Activated B cell treated with CpG ODN at 0.5 μM for 24 hours (primary cell): ENCODE measurements at regions of chr5 and their contacts with region 1.

Region 1: GRCh38 chr5:96729156-96729555 is 67.0 kb downstream of the CAST start:
- DNase-seq: no peak
- ATAC-seq: no peak
- H3K4me3 Mint-ChIP-seq: no peak overlapping the region
- H3K27ac Mint-ChIP-seq: no peak overlapping the region
- H3K4me1 Mint-ChIP-seq: peaks cover 3% of the 10 kb centered on the region
- H3K27me3 Mint-ChIP-seq: no peaks in the 10 kb centered on the region
- CTCF ChIP-seq: no peak

Region 2: DNA sequence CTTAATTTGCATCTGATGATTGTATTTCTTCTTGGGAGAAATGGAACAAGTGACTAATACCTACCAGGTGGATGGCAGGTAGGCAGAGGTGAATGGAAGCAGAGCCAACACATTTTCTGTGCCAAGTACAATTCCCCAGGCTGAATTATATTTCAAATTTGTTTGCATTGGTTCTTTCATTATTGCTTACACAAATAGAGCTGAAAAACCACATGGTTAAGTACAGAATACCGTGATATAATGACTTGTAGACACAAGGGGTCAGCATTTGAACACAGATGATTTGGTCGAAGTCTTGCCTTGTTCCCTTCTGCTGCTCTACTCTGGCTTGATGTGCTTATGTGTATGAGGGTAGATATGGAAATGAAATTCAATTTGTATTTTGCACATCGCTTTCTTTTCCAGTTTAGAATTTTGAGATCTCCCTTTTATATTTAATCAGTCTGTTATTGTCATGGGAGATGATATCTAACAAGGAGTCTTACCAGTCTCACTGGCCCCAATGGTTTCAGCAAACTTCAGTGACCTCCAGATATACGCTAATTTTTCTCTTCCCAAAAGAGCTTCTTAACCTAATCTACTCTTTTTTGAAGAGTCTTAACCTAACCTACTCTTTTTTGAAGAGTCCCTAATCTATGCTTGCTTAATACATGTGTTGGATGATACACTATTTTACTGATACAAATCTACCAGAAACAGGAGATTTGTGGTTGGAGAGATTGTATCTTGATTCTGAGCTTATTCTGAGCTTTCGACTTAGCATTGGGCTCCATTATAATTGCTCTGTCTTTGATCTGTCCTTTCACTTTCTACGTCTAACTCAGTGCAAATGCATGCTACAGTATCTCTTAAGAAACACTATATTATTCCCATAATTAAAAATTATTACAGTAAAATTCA is 384.2 kb before region 1 on chr5:
- CTCF ChIA-PET with region 1: no interaction called
- POLR2A ChIA-PET with region 1: no interaction called
- intact Hi-C with region 1: loop called (anchors 10 kb)
- DNase-seq: no peak
- ATAC-seq: no peak
- H3K4me3 Mint-ChIP-seq: no peak overlapping the region
- H3K27ac Mint-ChIP-seq: no peak overlapping the region
- H3K4me1 Mint-ChIP-seq: no peaks in the 10 kb centered on the region
- H3K27me3 Mint-ChIP-seq: peaks cover 14% of the 10 kb centered on the region
- CTCF ChIP-seq: no peak